ENCODE measurements at regions of chr19 and their contacts with region 1.

Region 1: DNA sequence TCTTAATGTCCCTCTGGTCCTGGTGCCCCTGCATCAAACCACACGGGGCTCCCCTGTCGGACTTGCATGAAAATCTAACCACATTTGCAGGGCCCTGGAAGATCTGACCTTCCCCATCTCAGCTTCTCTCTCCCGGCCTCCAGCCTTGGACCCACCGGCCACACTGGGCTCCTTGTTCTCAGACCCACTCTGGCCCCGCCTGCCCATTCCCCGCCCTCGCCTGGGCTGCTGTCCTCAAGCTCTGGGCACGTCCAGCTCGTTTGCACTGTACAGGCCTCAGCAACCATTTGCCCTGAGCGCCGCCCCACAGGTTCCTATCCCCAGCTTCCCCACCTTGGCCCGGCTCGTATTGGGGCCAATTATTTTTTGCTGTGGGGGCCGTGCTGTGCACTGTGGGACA is 10.5 kb downstream of the MYO9B start:
- DNase-seq: peak; percentile 32 to 91 (median 88)
- H3K4me3 ChIP-seq: peak overlapping the region in 32 of 59 donors; percentile 2 to 48 (median 26)
- H3K27ac ChIP-seq: peak overlapping the region; percentile 40 to 98 (median 86)
- H3K27me3 ChIP-seq: no peaks in the 10 kb centered on the region
- CTCF ChIP-seq: peak in 2 of 56 donors; percentile 16 to 27

Region 2: GRCh38 chr19:17125715-17126677 is 39.9 kb after region 1 on chr19:
- intact Hi-C with region 1: loop called (anchors 5 kb)
- DNase-seq: peak in 9 of 10 donors; percentile 46 to 69 (median 59)
- H3K4me3 ChIP-seq: peak overlapping the region in 25 of 59 donors; percentile 2 to 39 (median 18)
- H3K27ac ChIP-seq: peak overlapping the region; percentile 8 to 93 (median 79)
- H3K27me3 ChIP-seq: no peaks in the 10 kb centered on the region
- CTCF ChIP-seq: no peak